ENCODE measurements at regions of chr2 and their contacts with region 1.

Region 1: GRCh38 chr2:132267105-132267497 is 105.3 kb upstream of the ANKRD30BL start:
- DNase-seq: no peak
- ATAC-seq: no peak
- H3K4me3 ChIP-seq: no peak overlapping the region
- H3K4me3 Mint-ChIP-seq: no peak overlapping the region
- H3K27ac ChIP-seq: no peak overlapping the region
- H3K27ac Mint-ChIP-seq: no peak overlapping the region
- H3K4me1 ChIP-seq: peaks cover 0 to 5% of the 10 kb centered on the region in 2 donors
- H3K4me1 Mint-ChIP-seq: peaks cover 0 to 5% (median 3%) of the 10 kb centered on the region in 7 donors
- H3K27me3 ChIP-seq: peaks cover 0 to 12% of the 10 kb centered on the region in 2 donors
- H3K27me3 Mint-ChIP-seq: peaks cover 0 to 7% (median 0%) of the 10 kb centered on the region in 5 donors

Region 2: DNA sequence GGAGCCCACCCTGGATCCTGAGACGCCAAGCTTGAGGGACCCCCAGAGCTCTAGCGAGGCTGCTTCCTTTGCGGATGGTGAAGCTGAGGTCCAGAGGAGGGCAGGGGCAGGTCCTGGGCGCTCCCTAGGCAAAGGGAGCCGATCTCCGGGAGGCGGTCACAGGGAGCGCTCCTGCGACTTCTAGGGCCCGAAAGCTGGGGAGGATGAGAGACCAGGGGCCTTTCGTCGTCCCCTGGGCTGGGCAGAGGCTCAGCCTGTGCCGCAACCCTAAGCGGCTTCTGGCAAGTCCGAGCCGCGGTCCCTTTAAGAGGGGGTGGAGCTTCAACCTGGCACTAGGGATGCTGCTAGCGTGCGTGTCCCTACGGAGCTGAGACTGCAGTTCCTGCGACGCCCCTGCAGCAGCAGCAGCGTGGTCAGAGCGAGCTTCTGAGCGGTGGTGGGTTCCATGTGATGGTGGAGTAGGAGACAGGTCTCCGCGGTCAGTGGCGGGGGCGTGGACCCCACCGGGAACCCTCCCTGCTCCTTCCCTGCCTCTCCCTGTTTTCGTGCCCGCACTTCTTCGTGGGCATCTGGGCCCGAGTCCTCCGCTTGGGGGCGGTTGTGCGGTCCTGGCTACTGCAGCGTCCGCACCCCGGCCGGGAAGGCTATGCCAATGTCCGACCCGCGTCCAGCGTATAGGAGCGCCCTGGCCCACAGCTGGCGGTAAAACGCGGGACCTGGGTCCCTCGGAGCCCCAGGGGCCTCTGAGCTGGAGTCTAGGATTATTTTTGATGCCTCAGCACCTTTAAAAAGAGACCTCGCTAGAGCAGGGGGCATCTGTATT is 584.8 kb before region 1 on chr2:
- CTCF ChIA-PET with region 1: no interaction called
- POLR2A ChIA-PET with region 1: no interaction called
- intact Hi-C with region 1: loop called in 1 of 2 experiments (anchors 10 kb)
- DNase-seq: peak in 8 of 9 donors; percentile 47 to 73 (median 61)
- ATAC-seq: peak; percentile 95
- H3K4me3 ChIP-seq: peak overlapping the region; percentile 84
- H3K4me3 Mint-ChIP-seq: peak overlapping the region; percentile 79 to 93 (median 89)
- H3K27ac ChIP-seq: peak overlapping the region; percentile 52
- H3K27ac Mint-ChIP-seq: peak overlapping the region; percentile 67 to 92 (median 78)
- H3K4me1 ChIP-seq: no peaks in the 10 kb centered on the region
- H3K4me1 Mint-ChIP-seq: peaks cover 13 to 50% (median 29%) of the 10 kb centered on the region in 7 donors
- H3K27me3 ChIP-seq: no peaks in the 10 kb centered on the region
- H3K27me3 Mint-ChIP-seq: peaks cover 0 to 5% (median 0%) of the 10 kb centered on the region in 5 donors

Region 3: DNA sequence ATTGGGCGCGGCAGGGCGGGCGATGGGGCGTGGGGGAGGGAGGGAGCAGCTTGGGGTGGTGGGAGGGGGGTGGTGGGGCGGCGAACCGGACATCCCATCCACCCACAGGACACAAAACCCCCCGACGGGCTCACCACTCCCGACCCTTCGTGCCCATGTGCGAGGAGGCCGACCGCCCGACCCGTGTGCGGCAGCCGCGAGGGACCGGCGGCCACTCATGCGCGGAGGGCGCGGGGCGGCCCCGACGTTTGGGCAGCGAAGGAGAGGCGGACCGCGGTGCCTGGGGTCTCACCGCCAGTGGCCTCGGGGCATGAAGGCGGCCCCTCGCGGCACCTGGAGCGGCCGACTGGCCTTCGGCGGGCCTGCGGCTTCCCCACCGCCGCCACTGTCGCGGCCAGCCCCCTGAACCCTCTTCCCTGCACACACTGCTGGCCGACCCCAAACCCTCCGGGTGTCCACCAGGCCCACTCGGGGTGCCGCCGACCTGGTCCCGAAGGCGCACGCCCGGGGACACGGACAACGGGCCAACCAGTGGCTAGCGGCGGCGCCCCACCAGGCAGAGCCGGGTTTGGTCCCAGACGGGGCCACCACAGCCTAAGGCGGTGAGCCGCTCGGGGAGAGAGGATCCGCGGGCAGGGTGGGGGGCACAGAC is 10.7 kb before region 1 on chr2:
- CTCF ChIA-PET with region 1: no interaction called
- POLR2A ChIA-PET with region 1: no interaction called
- intact Hi-C with region 1: no loop called
- DNase-seq: no peak
- ATAC-seq: no peak
- H3K4me3 ChIP-seq: no peak overlapping the region
- H3K4me3 Mint-ChIP-seq: no peak overlapping the region
- H3K27ac ChIP-seq: no peak overlapping the region
- H3K27ac Mint-ChIP-seq: no peak overlapping the region
- H3K4me1 ChIP-seq: no peaks in the 10 kb centered on the region
- H3K4me1 Mint-ChIP-seq: no peaks in the 10 kb centered on the region
- H3K27me3 ChIP-seq: no peaks in the 10 kb centered on the region
- H3K27me3 Mint-ChIP-seq: peaks cover 10 to 25% (median 14%) of the 10 kb centered on the region in 5 donors

Region 4: DNA sequence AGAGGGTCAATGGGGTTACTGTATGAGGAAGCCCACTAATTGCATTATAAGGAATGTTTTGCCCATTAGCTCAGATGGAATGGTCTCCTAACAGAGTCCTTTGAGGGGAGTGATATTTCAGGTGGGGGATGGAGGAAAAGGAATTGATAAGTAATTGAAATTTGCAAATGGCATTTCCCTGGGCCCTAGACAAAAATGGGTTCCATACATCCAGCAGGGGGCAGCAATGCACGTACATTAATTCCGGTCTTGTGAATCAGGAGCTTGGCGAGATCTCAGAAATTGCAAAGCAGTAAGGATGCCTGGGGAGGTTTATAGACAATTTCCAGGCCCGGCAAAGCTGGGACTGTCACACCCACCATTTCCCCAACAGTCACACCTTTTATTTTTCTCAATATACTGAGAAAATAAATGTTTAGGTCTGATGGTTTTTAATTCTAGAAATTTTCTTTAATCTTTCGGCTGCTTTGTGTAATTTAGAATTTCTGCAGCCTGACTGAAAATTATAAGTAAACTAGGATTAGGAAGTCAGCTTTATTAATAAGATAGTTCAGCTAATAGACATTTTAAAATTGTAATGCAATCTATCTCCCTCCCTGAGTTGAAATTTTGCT is 280.1 kb after region 1 on chr2:
- CTCF ChIA-PET with region 1: no interaction called
- POLR2A ChIA-PET with region 1: no interaction called
- intact Hi-C with region 1: loop called in 1 of 2 experiments (anchors 5 kb)
- DNase-seq: peak in 2 of 9 donors; percentile 4 to 34
- ATAC-seq: no peak
- H3K4me3 ChIP-seq: no peak overlapping the region
- H3K4me3 Mint-ChIP-seq: no peak overlapping the region
- H3K27ac ChIP-seq: no peak overlapping the region
- H3K27ac Mint-ChIP-seq: no peak overlapping the region
- H3K4me1 ChIP-seq: no peaks in the 10 kb centered on the region
- H3K4me1 Mint-ChIP-seq: no peaks in the 10 kb centered on the region
- H3K27me3 ChIP-seq: no peaks in the 10 kb centered on the region
- H3K27me3 Mint-ChIP-seq: peaks cover 0 to 8% (median 4%) of the 10 kb centered on the region in 5 donors

Region 5: DNA sequence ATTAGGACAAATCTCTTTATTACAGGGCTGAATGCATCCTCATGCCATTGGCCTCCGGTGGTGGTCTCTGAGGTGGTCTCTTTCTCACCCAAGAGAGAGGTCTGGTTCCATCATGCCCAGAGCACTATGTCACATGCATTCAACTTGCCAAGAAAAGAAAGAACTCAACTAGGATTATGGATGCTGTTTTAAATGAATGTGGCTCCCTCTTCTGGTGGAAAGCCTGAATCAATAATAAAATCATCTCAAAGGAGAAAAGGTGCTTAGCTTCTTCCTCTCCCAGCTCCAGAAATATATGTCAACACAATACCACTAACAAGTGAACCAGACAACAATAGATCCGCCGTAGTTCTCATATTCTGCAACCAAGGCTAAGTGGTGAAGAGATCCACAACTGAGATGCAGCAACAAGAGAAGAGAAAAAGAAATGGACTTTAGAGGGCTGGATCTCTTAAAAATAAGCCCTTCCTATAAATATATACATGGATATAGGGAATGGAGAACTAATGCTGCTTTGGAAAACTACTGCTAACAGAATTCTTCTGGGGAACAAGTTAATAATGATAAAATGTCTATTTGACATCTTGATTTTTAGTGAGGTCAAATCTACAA is 904.4 kb after region 1 on chr2:
- CTCF ChIA-PET with region 1: no interaction called
- POLR2A ChIA-PET with region 1: no interaction called
- intact Hi-C with region 1: loop called in 1 of 2 experiments (anchors 1 kb)
- DNase-seq: peak in 1 of 9 donors; percentile 4
- ATAC-seq: no peak
- H3K4me3 ChIP-seq: no peak overlapping the region
- H3K4me3 Mint-ChIP-seq: no peak overlapping the region
- H3K27ac ChIP-seq: no peak overlapping the region
- H3K27ac Mint-ChIP-seq: no peak overlapping the region
- H3K4me1 ChIP-seq: no peaks in the 10 kb centered on the region
- H3K4me1 Mint-ChIP-seq: no peaks in the 10 kb centered on the region
- H3K27me3 ChIP-seq: no peaks in the 10 kb centered on the region
- H3K27me3 Mint-ChIP-seq: peaks cover 0 to 6% (median 0%) of the 10 kb centered on the region in 5 donors

Region 6: DNA sequence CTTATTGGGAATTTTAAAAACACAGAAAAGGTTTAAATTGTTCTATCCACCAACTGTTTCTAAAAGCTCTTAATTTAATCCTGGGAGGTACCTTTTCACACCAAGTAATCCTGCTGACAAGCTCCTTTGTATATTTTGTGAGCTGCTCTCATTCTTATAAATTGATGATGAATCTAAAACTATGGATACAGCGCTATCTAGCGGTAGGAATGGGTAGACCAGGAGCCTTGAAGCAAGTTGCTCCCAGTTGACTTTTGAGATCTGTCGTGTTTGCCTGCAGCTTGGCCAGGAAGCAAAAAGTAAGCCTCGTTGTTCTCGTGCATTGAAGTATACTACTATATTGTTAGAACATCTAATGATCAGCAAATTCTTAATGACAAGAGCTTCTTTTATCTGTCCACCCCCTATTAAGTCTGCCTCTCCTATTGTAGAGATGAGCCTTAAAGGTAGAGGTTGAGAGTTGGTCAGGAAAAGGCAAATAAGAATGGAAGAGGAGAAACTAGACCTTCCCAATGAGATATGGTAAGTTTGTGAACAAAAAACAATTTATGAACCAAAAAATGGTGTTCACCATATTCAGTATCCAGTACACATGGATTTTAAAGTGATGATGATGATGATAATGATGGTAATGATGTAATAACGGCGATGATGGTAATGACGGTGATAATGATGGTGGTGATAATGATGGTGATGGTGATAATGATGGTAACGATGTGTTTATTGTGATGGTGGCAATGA is 1513.2 kb after region 1 on chr2:
- CTCF ChIA-PET with region 1: no interaction called
- POLR2A ChIA-PET with region 1: no interaction called
- intact Hi-C with region 1: loop called in 1 of 2 experiments (anchors 10 kb)
- DNase-seq: peak in 1 of 9 donors; percentile 7
- ATAC-seq: no peak
- H3K4me3 ChIP-seq: no peak overlapping the region
- H3K4me3 Mint-ChIP-seq: no peak overlapping the region
- H3K27ac ChIP-seq: no peak overlapping the region
- H3K27ac Mint-ChIP-seq: no peak overlapping the region
- H3K4me1 ChIP-seq: no peaks in the 10 kb centered on the region
- H3K4me1 Mint-ChIP-seq: no peaks in the 10 kb centered on the region
- H3K27me3 ChIP-seq: no peaks in the 10 kb centered on the region
- H3K27me3 Mint-ChIP-seq: no peaks in the 10 kb centered on the region

Region 7: GRCh38 chr2:133844214-133844892 is 1577.3 kb after region 1 on chr2:
- CTCF ChIA-PET with region 1: no interaction called
- POLR2A ChIA-PET with region 1: no interaction called
- intact Hi-C with region 1: loop called in 1 of 2 experiments (anchors 2 kb)
- DNase-seq: peak in 8 of 9 donors; percentile 18 to 60 (median 36)
- ATAC-seq: peak; percentile 72
- H3K4me3 ChIP-seq: no peak overlapping the region
- H3K4me3 Mint-ChIP-seq: peak overlapping the region in 1 of 10 donors; percentile 54
- H3K27ac ChIP-seq: no peak overlapping the region
- H3K27ac Mint-ChIP-seq: no peak overlapping the region
- H3K4me1 ChIP-seq: no peaks in the 10 kb centered on the region
- H3K4me1 Mint-ChIP-seq: peaks cover 0 to 7% (median 5%) of the 10 kb centered on the region in 7 donors
- H3K27me3 ChIP-seq: no peaks in the 10 kb centered on the region
- H3K27me3 Mint-ChIP-seq: peaks cover 11 to 20% (median 15%) of the 10 kb centered on the region in 5 donors